Vagina (tissue), 2 donors: ENCODE measurements at regions of chr5 and their contacts with region 1.

Region 1: GRCh38 chr5:101062902-101063301 is 159.8 kb upstream of the ST8SIA4 start:
- DNase-seq: no peak
- H3K4me3 ChIP-seq: no peak overlapping the region
- H3K27ac ChIP-seq: no peak overlapping the region
- H3K4me1 ChIP-seq: no peaks in the 10 kb centered on the region
- H3K27me3 ChIP-seq: no peaks in the 10 kb centered on the region
- CTCF ChIP-seq: no peak
- POLR2A ChIP-seq: no peak

Region 2: DNA sequence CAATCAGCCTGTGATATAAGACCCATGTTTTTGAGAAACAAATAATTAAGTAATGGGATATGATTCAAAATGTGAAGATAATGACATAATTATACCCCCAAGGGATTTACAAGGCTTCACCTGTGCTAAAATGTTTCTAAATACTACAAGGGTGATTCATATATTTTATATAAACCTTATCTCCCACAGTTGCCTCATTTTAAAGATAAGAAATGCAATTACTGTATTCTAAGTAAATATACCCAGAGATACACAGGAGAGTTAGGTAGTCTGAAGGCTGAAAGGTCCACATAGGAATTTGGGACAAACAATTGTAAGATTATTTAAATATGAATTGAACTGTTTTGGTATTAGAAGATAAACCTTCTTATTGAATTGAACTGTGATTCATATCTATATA is 1472.0 kb before region 1 on chr5:
- intact Hi-C with region 1: loop called (anchors 5 kb)
- DNase-seq: no peak
- H3K4me3 ChIP-seq: no peak overlapping the region
- H3K27ac ChIP-seq: no peak overlapping the region
- H3K4me1 ChIP-seq: no peaks in the 10 kb centered on the region
- H3K27me3 ChIP-seq: no peaks in the 10 kb centered on the region
- CTCF ChIP-seq: no peak
- POLR2A ChIP-seq: no peak